Activated CD4-positive, alpha-beta T cell treated with anti-CD3 and anti-CD28 coated beads for 36 hours (primary cell): ENCODE measurements at regions of chr1 and their contacts with region 1.

Region 1: DNA sequence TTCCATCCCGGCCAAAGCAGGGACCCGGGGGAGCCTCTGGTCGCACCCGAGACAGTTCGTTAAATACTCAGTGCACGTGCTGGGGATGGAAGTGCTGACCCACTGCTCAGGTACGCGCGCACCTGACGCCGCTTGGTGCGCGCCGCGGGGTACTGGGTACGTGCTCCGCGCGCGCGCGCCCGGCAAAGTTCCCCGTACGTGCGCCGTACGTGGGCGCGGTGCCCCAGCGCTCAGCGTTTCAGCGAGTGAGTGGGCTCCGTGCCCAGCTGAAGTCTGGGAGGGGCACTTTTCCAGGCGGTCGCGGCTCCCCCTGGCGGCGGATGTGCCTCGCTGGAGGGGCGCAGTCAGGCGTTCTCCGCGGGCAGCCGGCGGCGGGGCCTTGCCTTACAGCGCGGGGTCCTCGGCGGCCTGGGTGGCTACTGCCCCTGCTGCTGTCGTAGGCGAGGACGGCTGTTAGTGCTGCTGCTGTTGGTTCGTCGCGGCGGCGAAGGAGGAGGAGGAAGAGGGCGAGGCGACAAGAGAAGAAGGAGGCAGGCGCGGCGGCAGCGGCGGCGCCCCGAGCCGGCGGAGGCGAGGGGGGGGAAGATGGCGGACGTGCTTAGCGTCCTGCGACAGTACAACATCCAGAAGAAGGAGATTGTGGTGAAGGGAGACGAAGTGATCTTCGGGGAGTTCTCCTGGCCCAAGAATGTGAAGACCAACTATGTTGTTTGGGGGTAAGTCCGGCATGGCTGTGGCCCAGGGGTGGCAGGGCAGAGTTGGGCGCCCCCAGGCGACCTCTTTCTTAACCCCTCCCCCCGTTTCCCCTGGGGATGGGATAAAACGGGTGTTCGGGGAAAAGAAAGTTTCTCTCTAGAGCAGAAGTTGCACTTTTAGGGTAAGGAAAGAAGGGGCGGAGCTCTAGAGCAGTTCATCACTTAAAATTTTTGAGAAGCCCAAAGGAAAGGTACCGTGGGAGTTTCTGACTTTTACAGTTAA is at the start of gene CDC73:
- DNase-seq: peak; percentile 99
- ATAC-seq: peak; percentile 94
- H3K4me3 Mint-ChIP-seq: peak within 1 kb of the TSS; percentile 91
- H3K27ac Mint-ChIP-seq: peak within 1 kb of the TSS; percentile 96
- H3K4me1 Mint-ChIP-seq: peaks cover 51% of the 10 kb centered on the region
- H3K27me3 Mint-ChIP-seq: no peaks in the 10 kb centered on the region
- total RNA-seq, gene CDC73: 40.8 to 52.4 TPM

Region 2: GRCh38 chr1:192225703-192226102 is 896.2 kb before region 1 on chr1:
- CTCF ChIA-PET with region 1: no interaction called
- POLR2A ChIA-PET with region 1: no interaction called
- intact Hi-C with region 1: no loop called
- DNase-seq: no peak
- ATAC-seq: no peak
- H3K4me3 Mint-ChIP-seq: no peak overlapping the region
- H3K27ac Mint-ChIP-seq: no peak overlapping the region
- H3K4me1 Mint-ChIP-seq: no peaks in the 10 kb centered on the region
- H3K27me3 Mint-ChIP-seq: no peaks in the 10 kb centered on the region

Region 3: DNA sequence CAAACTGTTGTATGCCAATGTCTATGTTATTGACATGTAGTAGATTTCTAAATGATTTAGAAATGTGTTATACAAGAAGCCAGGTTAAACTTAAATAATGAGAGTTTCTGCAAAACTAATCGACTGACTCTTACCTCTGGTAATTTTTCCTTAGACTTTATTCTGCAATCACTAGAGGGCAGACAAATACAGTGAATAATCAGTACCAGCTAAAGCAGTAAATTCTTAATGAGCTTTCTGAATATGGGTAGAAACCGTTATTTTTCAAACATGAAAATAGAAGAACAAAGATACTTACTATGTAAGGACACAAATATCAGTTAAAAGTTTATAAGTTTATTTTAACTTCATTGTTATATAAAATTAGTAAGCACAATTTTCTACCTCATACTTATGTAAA is 644.3 kb before region 1 on chr1:
- CTCF ChIA-PET with region 1: no interaction called
- POLR2A ChIA-PET with region 1: no interaction called
- intact Hi-C with region 1: loop called (anchors 2 to 10 kb)
- DNase-seq: no peak
- ATAC-seq: peak; percentile 67
- H3K4me3 Mint-ChIP-seq: no peak overlapping the region
- H3K27ac Mint-ChIP-seq: no peak overlapping the region
- H3K4me1 Mint-ChIP-seq: peaks cover 2% of the 10 kb centered on the region
- H3K27me3 Mint-ChIP-seq: no peaks in the 10 kb centered on the region

Region 4: GRCh38 chr1:192983349-192983980 is 138.4 kb before region 1 on chr1:
- CTCF ChIA-PET with region 1: no interaction called
- POLR2A ChIA-PET with region 1: no interaction called
- intact Hi-C with region 1: loop called in 1 of 2 experiments (anchors 1 kb)
- DNase-seq: peak; percentile 67
- ATAC-seq: peak; percentile 84
- H3K4me3 Mint-ChIP-seq: no peak overlapping the region
- H3K27ac Mint-ChIP-seq: peak overlapping the region; percentile 76
- H3K4me1 Mint-ChIP-seq: peaks cover 39% of the 10 kb centered on the region
- H3K27me3 Mint-ChIP-seq: no peaks in the 10 kb centered on the region

Region 5: GRCh38 chr1:192998536-192998935 is 123.4 kb before region 1 on chr1:
- CTCF ChIA-PET with region 1: no interaction called
- POLR2A ChIA-PET with region 1: no interaction called
- intact Hi-C with region 1: no loop called
- DNase-seq: no peak
- ATAC-seq: peak; percentile 53
- H3K4me3 Mint-ChIP-seq: no peak overlapping the region
- H3K27ac Mint-ChIP-seq: no peak overlapping the region
- H3K4me1 Mint-ChIP-seq: peaks cover 3% of the 10 kb centered on the region
- H3K27me3 Mint-ChIP-seq: no peaks in the 10 kb centered on the region

Region 6: DNA sequence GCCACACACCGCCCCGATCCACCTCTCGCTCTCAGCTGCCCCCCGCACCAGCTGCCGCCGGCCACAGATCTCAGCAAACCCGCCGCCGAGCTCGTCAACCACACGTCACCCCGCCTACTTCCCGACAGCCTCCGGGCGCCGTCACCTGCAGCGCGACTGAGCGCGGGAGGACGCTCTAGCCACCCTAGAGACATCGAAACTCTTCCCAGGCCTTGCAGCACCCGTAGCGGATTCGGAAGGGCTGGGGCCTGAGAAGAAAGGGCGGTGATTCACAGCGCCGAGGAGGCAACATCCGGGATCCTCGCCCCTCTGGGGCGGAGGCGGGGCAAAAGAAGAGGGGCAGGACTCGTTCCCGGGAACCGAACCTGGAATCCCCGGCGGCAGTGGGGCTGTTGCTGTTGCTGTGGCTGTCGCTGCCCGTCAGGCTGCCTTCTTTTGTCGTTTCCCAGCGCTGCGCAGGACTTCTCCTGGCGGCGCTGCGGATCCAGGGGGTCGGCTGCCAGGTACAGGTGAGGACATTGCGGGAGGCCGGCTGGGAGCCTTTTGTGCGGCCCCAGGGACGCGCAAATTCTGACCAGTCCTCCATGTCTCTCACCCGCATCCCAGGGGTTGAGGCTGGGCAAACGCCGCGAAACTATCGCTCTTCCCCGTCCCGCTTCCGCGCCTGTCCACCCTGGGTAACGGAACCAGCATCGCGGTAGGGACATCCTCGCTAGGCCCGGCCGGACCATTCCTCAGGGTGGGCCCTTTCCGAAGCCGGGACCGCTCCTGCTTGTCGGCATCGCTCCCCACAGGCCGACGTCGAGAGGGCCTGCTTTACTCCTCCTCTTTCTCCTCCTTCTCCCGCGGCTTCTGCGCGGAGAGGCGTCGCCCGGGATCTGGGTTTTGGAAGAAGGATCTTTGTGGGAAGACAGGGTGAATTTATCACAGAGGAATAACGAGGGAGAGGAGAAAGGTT is 62.4 kb before region 1 on chr1 and contains the starts of genes RO60 and UCHL5:
- CTCF ChIA-PET with region 1: interaction called, 9 read pairs
- POLR2A ChIA-PET with region 1: interaction called, 16 read pairs
- intact Hi-C with region 1: loop called (anchors 1 kb)
- DNase-seq: peak; percentile 97
- ATAC-seq: peak; percentile 94
- H3K4me3 Mint-ChIP-seq: peak within 1 kb of the TSS; percentile 90
- H3K27ac Mint-ChIP-seq: peak within 1 kb of the TSS; percentile 99
- H3K4me1 Mint-ChIP-seq: peaks cover 50% of the 10 kb centered on the region
- H3K27me3 Mint-ChIP-seq: no peaks in the 10 kb centered on the region
- total RNA-seq, gene RO60: 45.4 to 57.3 TPM
- total RNA-seq, gene UCHL5: 94.5 to 141 TPM

Region 7: GRCh38 chr1:193069748-193070385 is 52.0 kb before region 1 on chr1:
- CTCF ChIA-PET with region 1: interaction called, 3 read pairs
- POLR2A ChIA-PET with region 1: no interaction called
- intact Hi-C with region 1: loop called in 1 of 2 experiments (anchors 2 kb)
- DNase-seq: no peak
- ATAC-seq: no peak
- H3K4me3 Mint-ChIP-seq: no peak overlapping the region
- H3K27ac Mint-ChIP-seq: peak overlapping the region; percentile 40
- H3K4me1 Mint-ChIP-seq: peaks cover 54% of the 10 kb centered on the region
- H3K27me3 Mint-ChIP-seq: no peaks in the 10 kb centered on the region

Region 8: DNA sequence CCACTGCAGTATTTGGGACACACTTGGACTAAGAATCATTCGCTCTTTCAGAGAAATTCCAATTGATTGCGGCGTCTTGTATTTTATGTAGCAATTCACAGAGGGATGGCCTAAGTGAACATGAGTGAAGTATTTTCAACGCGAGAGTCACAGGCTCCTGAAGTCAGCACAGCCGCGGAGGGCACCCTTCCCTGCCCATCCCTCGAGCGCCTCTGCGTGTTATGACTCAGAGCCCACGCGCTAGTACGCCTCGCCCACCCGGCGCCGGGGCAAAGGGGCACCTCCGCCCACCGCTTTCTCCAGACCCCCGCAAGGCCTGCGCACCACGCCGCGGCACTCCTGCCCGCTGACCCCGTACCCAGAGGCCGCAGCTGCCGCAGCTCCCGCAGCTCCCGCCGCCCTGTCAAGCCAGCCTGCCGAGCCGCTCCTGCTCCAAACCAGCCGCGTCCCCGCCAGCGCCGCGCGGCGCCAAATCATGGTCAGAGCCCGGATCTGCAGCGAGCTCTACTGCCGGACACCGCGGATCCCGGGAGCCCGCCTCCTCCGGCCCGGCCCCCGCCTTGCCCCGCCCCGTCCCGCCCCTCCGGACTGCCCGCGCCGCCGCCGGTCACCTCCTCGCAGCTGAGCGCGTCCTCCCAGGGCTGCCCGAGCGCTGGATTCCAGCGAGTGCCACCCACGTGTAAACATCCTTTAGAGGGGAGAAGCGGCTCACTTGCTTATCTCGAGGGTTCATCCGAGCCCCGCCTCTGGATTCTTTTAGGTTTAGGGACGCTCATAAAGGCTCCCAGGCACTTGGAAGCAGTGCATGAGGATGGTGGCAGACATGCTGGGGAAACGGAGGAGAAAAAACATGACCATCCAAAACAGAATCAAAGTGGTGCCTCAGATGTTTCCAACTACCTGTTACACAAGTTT is 16.7 kb before region 1 on chr1 and contains the start of gene GLRX2:
- CTCF ChIA-PET with region 1: interaction called, 7 read pairs
- POLR2A ChIA-PET with region 1: interaction called, 4 read pairs
- intact Hi-C with region 1: loop called (anchors 1 kb)
- DNase-seq: peak; percentile 75
- ATAC-seq: peak; percentile 91
- H3K4me3 Mint-ChIP-seq: peak within 1 kb of the TSS; percentile 88
- H3K27ac Mint-ChIP-seq: peak within 1 kb of the TSS; percentile 78
- H3K4me1 Mint-ChIP-seq: peaks cover 14% of the 10 kb centered on the region
- H3K27me3 Mint-ChIP-seq: no peaks in the 10 kb centered on the region
- total RNA-seq, gene GLRX2: 29.8 to 30.2 TPM

Region 9: DNA sequence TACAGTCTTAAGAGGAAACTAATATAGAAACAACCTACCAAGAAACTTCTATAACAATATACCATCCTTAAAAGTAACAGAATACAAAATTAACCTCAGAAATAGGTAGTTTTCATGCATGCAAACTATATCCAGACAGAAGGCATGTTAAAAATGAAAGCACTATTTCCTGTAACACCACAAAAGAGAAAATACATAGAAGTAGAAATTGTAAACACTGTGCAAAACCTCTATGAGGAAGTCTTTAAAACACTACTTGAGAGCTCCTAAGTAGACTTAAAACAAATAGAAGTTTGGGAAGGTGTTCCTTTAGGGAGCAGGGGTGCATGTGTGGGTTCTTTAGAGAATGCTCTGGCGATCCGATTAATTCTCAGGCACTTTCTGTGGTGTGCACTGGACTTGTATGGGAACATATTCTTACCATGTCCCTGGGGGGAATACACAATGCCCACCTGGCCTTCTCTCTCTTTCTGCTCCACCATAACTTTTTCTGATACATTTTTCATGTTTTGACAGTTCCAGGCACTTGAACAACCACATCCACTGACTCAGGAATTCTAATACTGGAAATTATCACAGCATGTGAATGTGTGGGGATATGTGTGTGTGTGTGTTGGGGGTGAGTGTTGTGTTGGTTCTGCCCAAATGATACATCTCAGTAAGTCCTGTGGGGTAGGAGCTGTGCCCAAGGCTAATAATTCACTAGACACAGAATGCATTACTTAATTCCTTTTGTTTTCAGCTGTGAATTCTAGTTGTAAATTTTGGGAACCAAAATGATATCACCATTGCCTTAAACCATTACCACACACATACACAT is 930.8 kb after region 1 on chr1:
- CTCF ChIA-PET with region 1: no interaction called
- POLR2A ChIA-PET with region 1: no interaction called
- intact Hi-C with region 1: no loop called
- DNase-seq: no peak
- ATAC-seq: peak; percentile 62
- H3K4me3 Mint-ChIP-seq: peak overlapping the region; percentile 16
- H3K27ac Mint-ChIP-seq: peak overlapping the region; percentile 83
- H3K4me1 Mint-ChIP-seq: peaks cover 56% of the 10 kb centered on the region
- H3K27me3 Mint-ChIP-seq: no peaks in the 10 kb centered on the region